ENCODE measurements at regions of chr3 and their contacts with region 1.

Region 1: GRCh38 chr3:150216041-150216811 is 191.9 kb upstream of the TSC22D2 start:
- DNase-seq: peak; percentile 41 to 70
- ATAC-seq: peak; percentile 83 to 97 (median 92)
- H3K4me3 ChIP-seq: no peak overlapping the region
- H3K27ac ChIP-seq: peak overlapping the region in 8 of 10 donors; percentile 14 to 68 (median 44)
- H3K4me1 ChIP-seq: peaks cover 0 to 24% (median 17%) of the 10 kb centered on the region in 9 donors
- H3K27me3 ChIP-seq: peaks cover 0 to 6% (median 0%) of the 10 kb centered on the region in 7 donors
- CTCF ChIP-seq: no peak

Region 2: DNA sequence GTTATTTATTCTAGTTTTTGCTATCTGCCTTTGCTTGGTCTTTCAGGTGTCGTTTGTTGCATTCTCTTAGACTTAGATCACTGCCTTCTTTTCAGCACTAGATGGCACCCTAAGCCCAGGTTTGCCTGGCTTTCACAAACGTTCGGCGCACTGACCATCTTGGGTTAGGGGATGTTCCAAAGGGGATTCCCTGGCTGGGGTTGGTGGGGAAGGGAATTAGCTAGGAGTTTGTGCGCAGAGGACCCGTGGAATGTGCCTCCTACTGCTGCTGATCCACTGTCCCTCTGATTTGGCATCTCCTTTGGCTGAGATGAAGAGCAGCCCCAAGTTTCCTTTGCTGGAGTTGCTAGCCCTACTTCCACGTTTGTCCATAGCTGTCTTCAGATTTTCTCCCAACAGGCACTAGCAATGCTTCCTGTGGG is 279.4 kb before region 1 on chr3:
- intact Hi-C with region 1: loop called in 1 of 10 experiments (anchors 2 kb)
- DNase-seq: peak; percentile 22 to 30
- ATAC-seq: peak; percentile 56 to 82 (median 77)
- H3K4me3 ChIP-seq: peak overlapping the region in 1 of 10 donors; percentile 5
- H3K27ac ChIP-seq: no peak overlapping the region
- H3K4me1 ChIP-seq: peaks cover 0 to 25% (median 7%) of the 10 kb centered on the region in 9 donors
- H3K27me3 ChIP-seq: no peaks in the 10 kb centered on the region
- CTCF ChIP-seq: peak; percentile 51 to 87 (median 75)

Measured in heart right ventricle (tissue), 16 donors.